ENCODE measurements at regions of chr1 and their contacts with region 1.

Region 1: GRCh38 chr1:203673550-203674427 is 47.2 kb downstream of the ATP2B4 start:
- DNase-seq: peak; percentile 27 to 79 (median 73)
- ATAC-seq: peak; percentile 91
- H3K4me3 ChIP-seq: no peak overlapping the region
- H3K4me3 Mint-ChIP-seq: peak overlapping the region; percentile 57 to 87 (median 77)
- H3K27ac ChIP-seq: peak overlapping the region; percentile 53
- H3K27ac Mint-ChIP-seq: peak overlapping the region; percentile 87 to 99 (median 95)
- H3K4me1 ChIP-seq: peaks cover 52 to 54% of the 10 kb centered on the region in 2 donors
- H3K4me1 Mint-ChIP-seq: peaks cover 50 to 81% (median 71%) of the 10 kb centered on the region in 7 donors
- H3K27me3 ChIP-seq: no peaks in the 10 kb centered on the region
- H3K27me3 Mint-ChIP-seq: no peaks in the 10 kb centered on the region

Region 2: GRCh38 chr1:203593723-203594122 is 80.1 kb before region 1 on chr1:
- CTCF ChIA-PET with region 1: interaction called, 6 read pairs
- POLR2A ChIA-PET with region 1: no interaction called
- intact Hi-C with region 1: loop called (anchors 1 kb)
- DNase-seq: peak in 7 of 9 donors; percentile 17 to 42 (median 25)
- ATAC-seq: peak; percentile 79
- H3K4me3 ChIP-seq: no peak overlapping the region
- H3K4me3 Mint-ChIP-seq: no peak overlapping the region
- H3K27ac ChIP-seq: no peak overlapping the region
- H3K27ac Mint-ChIP-seq: peak overlapping the region in 4 of 9 donors; percentile 20 to 70 (median 50)
- H3K4me1 ChIP-seq: no peaks in the 10 kb centered on the region
- H3K4me1 Mint-ChIP-seq: peaks cover 0 to 32% (median 7%) of the 10 kb centered on the region in 7 donors
- H3K27me3 ChIP-seq: no peaks in the 10 kb centered on the region
- H3K27me3 Mint-ChIP-seq: peaks cover 0 to 4% (median 0%) of the 10 kb centered on the region in 5 donors